ENCODE measurements at regions of chr3 and their contacts with region 1.

Region 1: GRCh38 chr3:112734718-112735350 is 93.9 kb upstream of the CCDC80 start:
- DNase-seq: peak; percentile 81
- H3K4me3 Mint-ChIP-seq: no peak overlapping the region
- H3K27ac Mint-ChIP-seq: no peak overlapping the region
- H3K4me1 Mint-ChIP-seq: peaks cover 14% of the 10 kb centered on the region
- H3K27me3 Mint-ChIP-seq: no peaks in the 10 kb centered on the region
- CTCF ChIP-seq: peak; percentile 72

Region 2: GRCh38 chr3:112086076-112086854 is 648.6 kb before region 1 on chr3 and contains the start of gene C3orf52:
- CTCF ChIA-PET with region 1: no interaction called
- POLR2A ChIA-PET with region 1: no interaction called
- intact Hi-C with region 1: no loop called
- DNase-seq: peak; percentile 87
- H3K4me3 Mint-ChIP-seq: peak within 1 kb of the TSS; percentile 90
- H3K27ac Mint-ChIP-seq: peak within 1 kb of the TSS; percentile 96
- H3K4me1 Mint-ChIP-seq: peaks cover 25% of the 10 kb centered on the region
- H3K27me3 Mint-ChIP-seq: no peaks in the 10 kb centered on the region
- CTCF ChIP-seq: no peak
- total RNA-seq, gene C3orf52: 10.4 and 16.1 TPM in 2 replicates

Region 3: GRCh38 chr3:112653209-112653871 is 81.5 kb before region 1 on chr3:
- CTCF ChIA-PET with region 1: interaction called, 10 read pairs
- POLR2A ChIA-PET with region 1: interaction called, 3 read pairs
- intact Hi-C with region 1: no loop called
- DNase-seq: peak; percentile 67
- H3K4me3 Mint-ChIP-seq: peak overlapping the region; percentile 4
- H3K27ac Mint-ChIP-seq: peak overlapping the region; percentile 40
- H3K4me1 Mint-ChIP-seq: peaks cover 39% of the 10 kb centered on the region
- H3K27me3 Mint-ChIP-seq: no peaks in the 10 kb centered on the region
- CTCF ChIP-seq: no peak

Region 4: GRCh38 chr3:112746675-112747280 is 11.9 kb after region 1 on chr3:
- CTCF ChIA-PET with region 1: interaction called, 47 read pairs
- POLR2A ChIA-PET with region 1: interaction called, 7 read pairs
- intact Hi-C with region 1: no loop called
- DNase-seq: peak; percentile 55
- H3K4me3 Mint-ChIP-seq: no peak overlapping the region
- H3K27ac Mint-ChIP-seq: no peak overlapping the region
- H3K4me1 Mint-ChIP-seq: peaks cover 6% of the 10 kb centered on the region
- H3K27me3 Mint-ChIP-seq: no peaks in the 10 kb centered on the region
- CTCF ChIP-seq: no peak

Region 5: DNA sequence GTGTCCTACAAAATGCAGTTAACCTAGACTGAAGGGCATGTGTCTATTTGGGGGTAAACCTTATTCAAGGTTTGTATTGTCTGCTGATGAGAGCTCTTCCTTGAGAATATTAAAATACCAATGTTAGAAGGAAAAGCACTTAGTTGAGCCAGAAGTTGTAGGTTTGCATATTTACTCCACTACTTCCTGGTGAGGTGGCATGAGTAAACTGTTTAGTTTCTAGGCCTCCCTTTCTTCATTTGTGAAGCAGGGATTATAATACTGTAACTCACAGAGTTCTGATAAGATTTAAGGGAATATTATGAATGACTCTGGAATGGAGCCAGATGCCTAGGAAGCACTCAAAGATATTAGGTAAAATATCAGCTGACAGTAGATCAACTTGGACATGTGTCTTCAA is 65.1 kb after region 1 on chr3:
- CTCF ChIA-PET with region 1: interaction called, 28 read pairs
- POLR2A ChIA-PET with region 1: no interaction called
- intact Hi-C with region 1: no loop called
- DNase-seq: no peak
- H3K4me3 Mint-ChIP-seq: no peak overlapping the region
- H3K27ac Mint-ChIP-seq: no peak overlapping the region
- H3K4me1 Mint-ChIP-seq: peaks cover 10% of the 10 kb centered on the region
- H3K27me3 Mint-ChIP-seq: no peaks in the 10 kb centered on the region
- CTCF ChIP-seq: no peak

Region 6: GRCh38 chr3:112814266-112814665 is 79.4 kb after region 1 on chr3:
- CTCF ChIA-PET with region 1: interaction called, 126 read pairs
- POLR2A ChIA-PET with region 1: interaction called, 11 read pairs
- intact Hi-C with region 1: loop called (anchors 1 kb)
- DNase-seq: peak; percentile 58
- H3K4me3 Mint-ChIP-seq: no peak overlapping the region
- H3K27ac Mint-ChIP-seq: no peak overlapping the region
- H3K4me1 Mint-ChIP-seq: peaks cover 11% of the 10 kb centered on the region
- H3K27me3 Mint-ChIP-seq: no peaks in the 10 kb centered on the region
- CTCF ChIP-seq: peak; percentile 33